A673 (cell line): ENCODE measurements at regions of chr10 and their contacts with region 1.

Region 1: GRCh38 chr10:119872860-119873681 is 428 bp upstream of the MCMBP start:
- DNase-seq: peak; percentile 95
- H3K4me3 ChIP-seq: peak overlapping the region; percentile 96
- H3K27ac ChIP-seq: peak overlapping the region; percentile 94
- H3K4me1 ChIP-seq: peaks cover 21% of the 10 kb centered on the region
- H3K27me3 ChIP-seq: no peaks in the 10 kb centered on the region
- CTCF ChIP-seq: no peak

Region 2: GRCh38 chr10:119596537-119597404 is 276.3 kb before region 1 on chr10 and contains the start of gene TIAL1:
- CTCF ChIA-PET with region 1: no interaction called
- POLR2A ChIA-PET with region 1: no interaction called
- intact Hi-C with region 1: loop called (anchors 10 kb)
- DNase-seq: peak; percentile 100
- H3K4me3 ChIP-seq: peak within 1 kb of the TSS; percentile 80
- H3K27ac ChIP-seq: peak within 1 kb of the TSS; percentile 98
- H3K4me1 ChIP-seq: peaks cover 40% of the 10 kb centered on the region
- H3K27me3 ChIP-seq: no peaks in the 10 kb centered on the region
- CTCF ChIP-seq: no peak
- total RNA-seq, gene TIAL1: 176 and 199 TPM in 2 replicates

Region 3: GRCh38 chr10:119784340-119785070 is 88.6 kb before region 1 on chr10:
- CTCF ChIA-PET with region 1: no interaction called
- POLR2A ChIA-PET with region 1: no interaction called
- intact Hi-C with region 1: no loop called
- DNase-seq: no peak
- H3K4me3 ChIP-seq: no peak overlapping the region
- H3K27ac ChIP-seq: no peak overlapping the region
- H3K4me1 ChIP-seq: peaks cover 50% of the 10 kb centered on the region
- H3K27me3 ChIP-seq: no peaks in the 10 kb centered on the region
- CTCF ChIP-seq: no peak

Region 4: DNA sequence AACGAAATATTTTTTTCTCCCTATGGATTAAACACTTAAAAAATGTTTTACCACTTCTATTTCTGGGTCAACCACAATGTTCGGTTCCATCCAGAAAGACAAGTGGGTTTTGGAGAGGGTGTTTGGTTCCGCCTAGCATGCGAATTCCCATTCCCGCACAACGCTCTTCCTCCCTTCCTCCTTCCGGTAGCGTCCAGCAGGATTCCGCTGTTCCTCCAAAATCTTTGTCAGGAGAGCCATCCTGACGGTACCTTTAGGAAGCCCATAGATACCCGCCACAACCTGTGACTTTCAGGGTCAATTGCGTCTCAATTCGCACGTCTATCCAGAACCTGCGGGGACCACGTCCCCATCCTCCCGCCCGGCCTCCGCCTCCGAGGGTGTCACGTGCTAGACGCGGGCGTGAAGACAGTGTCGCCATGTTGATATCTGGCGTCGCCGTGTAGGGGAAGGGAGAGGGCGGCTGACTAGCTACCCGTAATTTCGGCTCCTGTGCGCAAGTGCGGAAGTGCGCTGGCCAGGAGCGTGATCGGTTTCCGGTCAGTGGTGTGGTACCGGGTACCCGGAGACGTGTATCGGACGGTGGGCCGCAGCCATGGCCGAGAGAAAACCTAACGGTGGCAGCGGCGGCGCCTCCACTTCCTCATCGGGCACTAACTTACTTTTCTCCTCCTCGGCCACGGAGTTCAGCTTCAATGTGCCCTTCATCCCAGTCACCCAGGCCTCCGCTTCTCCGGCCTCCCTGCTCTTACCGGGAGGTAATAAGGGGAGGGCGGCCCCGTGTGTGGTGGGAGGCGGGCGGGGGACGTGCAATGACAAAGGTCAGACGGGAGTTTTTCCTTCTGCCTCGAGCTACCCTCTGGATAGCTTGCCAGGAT is 19.4 kb after region 1 on chr10 and contains the start of gene SEC23IP:
- CTCF ChIA-PET with region 1: interaction called, 3 read pairs
- POLR2A ChIA-PET with region 1: interaction called, 3 read pairs
- intact Hi-C with region 1: loop called (anchors 2 kb)
- DNase-seq: peak; percentile 96
- H3K4me3 ChIP-seq: peak within 1 kb of the TSS; percentile 99
- H3K27ac ChIP-seq: peak within 1 kb of the TSS; percentile 83
- H3K4me1 ChIP-seq: no peaks in the 10 kb centered on the region
- H3K27me3 ChIP-seq: no peaks in the 10 kb centered on the region
- CTCF ChIP-seq: no peak
- total RNA-seq, gene SEC23IP: 78.6 and 89.9 TPM in 2 replicates

Region 5: DNA sequence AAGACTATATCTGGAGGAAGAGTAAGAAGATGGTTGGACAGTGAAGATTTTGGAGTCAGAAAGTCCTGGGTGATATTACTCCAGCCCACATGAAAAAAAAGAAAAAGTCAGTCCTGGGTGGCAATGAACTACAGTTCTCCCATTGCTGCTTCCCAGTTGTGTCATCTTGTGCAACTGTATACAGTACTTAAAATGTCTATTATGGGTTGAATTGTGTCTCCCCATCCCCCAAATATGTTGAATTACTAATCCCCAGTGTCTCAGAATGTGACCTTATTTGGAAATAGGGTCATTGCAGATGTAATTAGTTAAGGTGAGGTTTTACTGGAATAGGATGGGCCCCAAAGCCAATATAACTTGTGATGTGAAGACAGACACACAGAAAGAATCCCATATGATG is 35.1 kb after region 1 on chr10:
- CTCF ChIA-PET with region 1: no interaction called
- POLR2A ChIA-PET with region 1: no interaction called
- intact Hi-C with region 1: no loop called
- DNase-seq: no peak
- H3K4me3 ChIP-seq: no peak overlapping the region
- H3K27ac ChIP-seq: no peak overlapping the region
- H3K4me1 ChIP-seq: no peaks in the 10 kb centered on the region
- H3K27me3 ChIP-seq: no peaks in the 10 kb centered on the region
- CTCF ChIP-seq: no peak